Motor neuron (in vitro differentiated cells): ENCODE measurements at regions of chr3 and their contacts with region 1.

Region 1: DNA sequence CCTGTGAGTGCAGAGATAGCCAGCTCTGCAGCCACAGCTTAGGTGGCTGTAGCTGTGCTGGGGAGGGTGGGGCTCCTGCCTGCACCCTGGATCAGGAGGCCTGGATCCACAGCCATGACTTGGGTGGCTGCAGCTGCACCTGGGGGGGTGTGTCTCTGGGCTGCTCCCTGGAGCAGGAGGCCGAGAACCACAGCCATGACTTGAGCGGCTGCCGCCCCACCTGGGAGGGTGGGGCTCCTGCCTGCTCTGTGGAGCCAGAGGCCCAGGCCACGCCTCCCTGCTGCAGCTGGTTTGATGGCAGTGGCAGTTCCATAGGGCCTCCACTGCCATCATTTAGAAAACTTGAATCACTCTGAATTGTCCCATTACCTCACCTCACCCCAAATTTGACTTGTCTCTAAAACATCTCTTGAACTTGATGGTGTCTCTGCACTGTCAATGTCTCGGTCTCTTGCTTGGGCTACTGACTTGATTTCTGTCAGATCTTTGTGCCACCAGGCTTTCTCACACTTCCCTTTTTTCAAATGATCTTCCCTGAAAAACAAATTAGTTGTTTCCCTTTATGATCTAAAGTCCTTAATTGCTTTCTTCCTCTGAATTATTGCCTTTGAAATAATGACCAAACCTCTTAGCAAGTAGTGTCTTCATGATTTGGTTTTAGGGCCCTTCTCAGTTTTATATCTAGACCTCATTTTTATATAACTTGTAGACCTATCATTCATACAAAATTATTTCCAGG is 313.2 kb upstream of the MME start:
- ATAC-seq: peak in 1 of 8 experiments; percentile 54
- H3K4me3 ChIP-seq: no peak overlapping the region
- H3K27ac ChIP-seq: no peak overlapping the region
- H3K4me1 ChIP-seq: no peaks in the 10 kb centered on the region

Region 2: DNA sequence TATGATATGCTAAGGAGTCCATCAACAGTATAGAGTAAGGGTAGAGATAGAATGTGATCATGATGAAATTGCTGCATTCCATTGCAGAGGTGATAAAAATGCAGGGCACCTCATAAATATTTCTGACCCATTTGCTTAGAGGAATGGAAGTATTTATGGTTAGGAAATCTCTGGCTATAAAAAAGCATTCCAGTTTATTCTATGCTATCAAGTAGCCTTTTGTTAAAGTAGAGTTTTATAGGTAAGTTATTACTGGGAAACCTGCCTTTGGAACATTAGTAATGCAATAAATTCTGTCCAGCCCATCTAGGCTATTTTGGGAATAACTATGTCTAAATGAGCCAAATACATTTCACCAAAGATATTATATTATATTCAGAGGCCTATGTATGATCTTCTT is 546.4 kb after region 1 on chr3:
- in situ Hi-C with region 1: loop called in 4 of 9 experiments (anchors 10 to 25 kb)
- ATAC-seq: peak in 4 of 8 experiments; percentile 33 to 78 (median 61)
- H3K4me3 ChIP-seq: no peak overlapping the region
- H3K27ac ChIP-seq: no peak overlapping the region
- H3K4me1 ChIP-seq: peaks cover 3 to 5% of the 10 kb centered on the region in 2 donors